MCF 10A (cell line): ENCODE measurements at regions of chr5 and their contacts with region 1.

Region 1: GRCh38 chr5:141094481-141095262 is at the start of gene PCDHB2:
- DNase-seq: peak; percentile 70
- H3K4me3 Mint-ChIP-seq: peak within 1 kb of the TSS; percentile 74
- H3K27ac Mint-ChIP-seq: peak within 1 kb of the TSS; percentile 89
- H3K4me1 Mint-ChIP-seq: no peaks in the 10 kb centered on the region
- H3K27me3 Mint-ChIP-seq: no peaks in the 10 kb centered on the region
- CTCF ChIP-seq: peak; percentile 58
- total RNA-seq, gene PCDHB2: 2.4 and 2.6 TPM in 2 replicates

Region 2: GRCh38 chr5:141084487-141084990 is 10.1 kb before region 1 on chr5:
- CTCF ChIA-PET with region 1: interaction called, 10 read pairs
- POLR2A ChIA-PET with region 1: no interaction called
- intact Hi-C with region 1: no loop called
- DNase-seq: peak; percentile 49
- H3K4me3 Mint-ChIP-seq: peak overlapping the region; percentile 87
- H3K27ac Mint-ChIP-seq: peak overlapping the region; percentile 84
- H3K4me1 Mint-ChIP-seq: peaks cover 7% of the 10 kb centered on the region
- H3K27me3 Mint-ChIP-seq: no peaks in the 10 kb centered on the region
- CTCF ChIP-seq: peak; percentile 59